ENCODE measurements at regions of chrX and their contacts with region 1.

Region 1: DNA sequence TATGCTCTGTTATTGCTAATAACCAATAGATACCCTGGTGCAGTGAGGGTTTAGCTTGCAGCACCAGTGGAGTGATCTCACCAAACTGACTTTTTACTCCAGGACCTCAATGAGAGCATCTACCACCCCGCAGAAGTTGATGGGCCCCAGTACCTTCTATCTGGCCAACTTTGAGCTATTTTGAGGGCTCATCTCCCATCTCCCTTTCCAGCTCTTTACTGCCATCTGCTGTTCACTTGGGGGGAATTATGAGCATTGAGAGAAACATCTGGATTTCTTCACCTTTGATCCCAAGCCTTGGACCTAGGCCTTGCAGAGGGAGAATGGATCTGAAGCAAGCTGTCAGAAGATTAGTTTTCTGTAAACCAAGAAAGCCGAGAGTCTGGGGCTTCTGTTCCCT is 143.6 kb downstream of the TMEM164 start:
- DNase-seq: peak; percentile 48
- ATAC-seq: peak; percentile 83
- H3K4me3 ChIP-seq: no peak overlapping the region
- H3K27ac ChIP-seq: no peak overlapping the region
- H3K4me1 ChIP-seq: no peaks in the 10 kb centered on the region; the same call in 1 of the 2 replicates
- H3K27me3 ChIP-seq: no peaks in the 10 kb centered on the region; the same call in 1 of the 2 replicates
- CTCF ChIP-seq: peak; percentile 63
- POLR2A ChIP-seq: no peak
- RAD21 ChIP-seq: peak; percentile 64

Region 2: GRCh38 chrX:109485470-109486340 is 660.8 kb before region 1 on chrX:
- CTCF ChIA-PET with region 1: no interaction called
- POLR2A ChIA-PET with region 1: no interaction called
- dilution Hi-C with region 1: no loop called
- in situ Hi-C with region 1: loop called (anchors 25 kb)
- intact Hi-C with region 1: no loop called
- DNase-seq: peak; percentile 66
- ATAC-seq: peak; percentile 80
- H3K4me3 ChIP-seq: no peak overlapping the region
- H3K27ac ChIP-seq: no peak overlapping the region
- H3K4me1 ChIP-seq: no peaks in the 10 kb centered on the region
- H3K27me3 ChIP-seq: peaks cover 9% of the 10 kb centered on the region
- CTCF ChIP-seq: peak; percentile 100
- POLR2A ChIP-seq: no peak
- RAD21 ChIP-seq: peak; percentile 75

Region 3: DNA sequence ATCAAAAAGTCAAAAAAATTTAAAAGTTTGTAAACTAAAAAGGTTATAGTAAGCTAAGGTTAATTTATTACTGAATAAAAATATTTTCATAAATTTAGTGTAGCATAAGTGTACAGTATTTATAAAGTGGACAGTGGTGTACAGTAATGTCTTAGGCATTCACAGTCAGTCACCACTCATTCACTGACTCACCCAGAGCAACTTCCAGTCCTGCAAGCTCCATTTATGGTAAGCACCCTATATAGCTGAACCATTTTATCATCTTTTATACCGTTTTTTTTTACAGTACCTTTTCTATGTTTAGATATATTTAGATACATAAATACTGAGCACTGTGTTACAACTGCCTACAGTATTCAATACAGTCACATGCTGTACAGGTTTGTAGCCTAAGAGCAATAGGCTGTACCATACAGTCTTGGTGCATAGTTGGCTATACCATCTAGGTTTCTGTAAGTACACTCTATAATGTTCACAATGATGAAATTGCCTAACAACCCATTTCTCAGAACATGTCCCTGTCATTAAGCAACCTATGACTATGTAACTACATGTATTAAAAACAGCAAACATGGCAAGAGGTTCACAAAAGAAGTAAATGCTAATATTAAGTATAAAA is 432.1 kb before region 1 on chrX:
- CTCF ChIA-PET with region 1: no interaction called
- POLR2A ChIA-PET with region 1: no interaction called
- dilution Hi-C with region 1: no loop called
- in situ Hi-C with region 1: no loop called
- intact Hi-C with region 1: loop called (anchors 1 kb)
- DNase-seq: peak; percentile 91
- ATAC-seq: peak; percentile 80
- H3K4me3 ChIP-seq: no peak overlapping the region
- H3K27ac ChIP-seq: peak overlapping the region; percentile 96
- H3K4me1 ChIP-seq: peaks cover 2% of the 10 kb centered on the region
- H3K27me3 ChIP-seq: no peaks in the 10 kb centered on the region
- CTCF ChIP-seq: no peak
- POLR2A ChIP-seq: no peak
- RAD21 ChIP-seq: no peak

Region 4: GRCh38 chrX:109911046-109911445 is 235.5 kb before region 1 on chrX:
- CTCF ChIA-PET with region 1: interaction called, 24 read pairs
- POLR2A ChIA-PET with region 1: no interaction called
- dilution Hi-C with region 1: no loop called
- in situ Hi-C with region 1: loop called (anchors 5 kb)
- intact Hi-C with region 1: loop called (anchors 1 kb)
- DNase-seq: no peak
- ATAC-seq: no peak; the same call in 1 of the 2 replicates
- H3K4me3 ChIP-seq: no peak overlapping the region
- H3K27ac ChIP-seq: no peak overlapping the region
- H3K4me1 ChIP-seq: no peaks in the 10 kb centered on the region
- H3K27me3 ChIP-seq: peaks cover 4% of the 10 kb centered on the region; the same call in 1 of the 2 replicates
- CTCF ChIP-seq: peak; percentile 51
- POLR2A ChIP-seq: no peak
- RAD21 ChIP-seq: 0 out of 2 replicates have a peak, but pooled peaks have one; percentile 22

Region 5: DNA sequence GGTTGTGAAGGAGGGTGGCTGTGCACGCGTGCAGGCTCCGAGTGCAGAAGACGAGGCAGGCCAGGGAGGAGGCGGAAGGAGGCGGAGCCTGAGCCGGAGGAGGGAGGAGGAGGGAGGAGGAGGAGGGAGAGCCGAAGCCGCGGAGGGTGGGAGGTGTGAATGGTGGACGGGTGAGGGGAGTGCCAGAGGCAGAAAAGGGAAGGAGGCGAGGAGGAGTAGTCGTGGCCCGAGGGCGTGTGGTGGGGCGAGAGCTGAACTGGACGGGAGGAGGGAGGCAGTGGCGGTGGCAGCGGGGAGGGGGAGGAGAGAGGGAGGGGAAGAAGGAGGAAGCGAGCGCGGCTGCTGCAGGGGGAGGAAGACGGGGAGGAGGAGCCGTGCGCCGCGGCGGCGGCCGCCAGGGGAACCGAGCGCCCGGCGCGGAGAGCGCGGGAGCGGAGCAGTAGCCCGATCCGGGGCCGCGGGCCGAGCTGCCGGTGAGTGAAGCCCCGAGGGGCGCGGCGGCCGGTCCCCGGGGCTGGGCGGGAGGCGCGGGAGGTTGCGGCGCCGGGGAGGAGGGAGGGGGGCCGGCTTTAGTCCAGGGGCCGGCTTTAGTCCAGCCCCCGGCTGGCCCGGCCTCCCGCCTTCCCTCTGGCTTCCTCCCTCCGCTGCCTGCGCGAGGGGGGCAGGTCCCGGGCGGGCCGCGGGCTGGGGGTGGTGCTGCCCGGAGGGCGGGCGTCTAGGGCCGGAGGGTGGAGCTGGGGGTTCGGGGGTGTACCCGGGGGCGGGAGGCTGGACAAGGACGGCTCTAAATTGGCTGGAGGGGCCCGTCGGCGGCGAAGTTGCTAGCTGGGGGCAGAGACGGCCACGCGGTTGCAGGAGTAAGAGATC is 144.0 kb before region 1 on chrX and contains the start of gene TMEM164:
- CTCF ChIA-PET with region 1: no interaction called
- POLR2A ChIA-PET with region 1: no interaction called
- dilution Hi-C with region 1: no loop called
- in situ Hi-C with region 1: no loop called
- intact Hi-C with region 1: loop called (anchors 10 kb)
- DNase-seq: peak; percentile 66
- ATAC-seq: peak; percentile 95
- H3K4me3 ChIP-seq: peak within 1 kb of the TSS; percentile 95
- H3K27ac ChIP-seq: peak within 1 kb of the TSS; percentile 100
- H3K4me1 ChIP-seq: no peaks in the 10 kb centered on the region
- H3K27me3 ChIP-seq: peaks cover 3% of the 10 kb centered on the region; the same call in 1 of the 2 replicates
- CTCF ChIP-seq: no peak
- POLR2A ChIP-seq: 0 out of 2 replicates have a peak, but pooled peaks have one; percentile 24
- RAD21 ChIP-seq: no peak
- total RNA-seq, gene TMEM164: 5.0 and 6.3 TPM in 2 replicates